ENCODE measurements at regions of chr13 and their contacts with region 1.

Region 1: DNA sequence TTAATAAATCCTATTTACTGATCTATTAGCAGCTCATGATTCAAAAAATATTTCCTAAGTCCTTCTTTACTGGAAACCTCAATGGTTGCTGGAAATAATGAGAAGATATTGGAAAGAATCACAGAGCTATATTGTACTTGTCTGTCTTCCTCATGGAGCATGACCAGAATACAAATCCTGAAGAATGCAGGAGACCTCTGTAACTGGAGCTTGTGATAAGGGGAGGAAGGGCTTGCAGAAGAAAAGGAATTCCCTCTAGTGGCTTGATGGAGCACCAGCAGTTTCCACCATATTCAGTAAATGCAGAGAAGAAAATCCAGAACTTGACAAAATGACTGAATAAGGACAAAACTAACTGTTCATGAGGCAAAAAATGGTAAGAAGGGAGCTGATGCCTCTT is 1333.1 kb downstream of the EFNB2 start:
- DNase-seq: peak in 1 of 10 donors; percentile 19

Region 2: DNA sequence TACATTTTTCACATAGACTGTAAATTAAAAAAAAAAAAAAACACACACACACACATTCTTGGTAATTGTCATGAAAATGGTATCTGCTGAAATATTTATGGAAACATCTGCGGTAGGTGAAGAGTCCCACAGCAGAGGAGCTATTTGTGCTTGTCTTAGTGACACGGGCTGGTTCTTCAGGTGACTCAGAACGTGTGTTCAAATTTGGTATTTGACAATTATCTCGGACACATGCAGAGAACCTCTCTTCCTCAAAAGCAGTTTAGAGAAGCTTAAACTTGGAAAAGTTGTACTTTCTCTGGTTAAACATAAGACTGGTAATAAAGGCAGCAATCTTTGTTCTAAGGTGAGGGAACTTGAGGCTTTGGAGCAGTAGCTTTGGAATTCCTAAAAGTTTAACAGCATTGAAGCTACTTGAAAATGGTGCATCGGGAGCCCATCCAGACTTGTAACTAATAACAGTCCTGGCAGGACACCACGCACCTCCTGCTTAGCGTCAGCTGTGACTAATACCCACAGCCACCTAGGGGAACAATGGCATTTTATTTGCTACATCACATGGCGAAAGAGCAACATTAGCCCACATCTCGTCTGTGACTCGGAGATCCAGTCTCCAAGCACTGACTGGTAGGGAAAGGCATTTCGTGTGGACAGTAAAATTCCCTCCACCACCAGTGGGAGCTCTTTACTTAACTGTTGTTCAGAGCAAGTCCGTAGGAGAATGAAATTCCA is 631.0 kb before region 1 on chr13:
- intact Hi-C with region 1: loop called (anchors 5 kb)
- DNase-seq: peak in 9 of 10 donors; percentile 28 to 90 (median 71)

Measured in posterior cingulate gyrus (tissue), 11 donors.